ENCODE measurements at regions of chr16 and their contacts with region 1.

Region 1: DNA sequence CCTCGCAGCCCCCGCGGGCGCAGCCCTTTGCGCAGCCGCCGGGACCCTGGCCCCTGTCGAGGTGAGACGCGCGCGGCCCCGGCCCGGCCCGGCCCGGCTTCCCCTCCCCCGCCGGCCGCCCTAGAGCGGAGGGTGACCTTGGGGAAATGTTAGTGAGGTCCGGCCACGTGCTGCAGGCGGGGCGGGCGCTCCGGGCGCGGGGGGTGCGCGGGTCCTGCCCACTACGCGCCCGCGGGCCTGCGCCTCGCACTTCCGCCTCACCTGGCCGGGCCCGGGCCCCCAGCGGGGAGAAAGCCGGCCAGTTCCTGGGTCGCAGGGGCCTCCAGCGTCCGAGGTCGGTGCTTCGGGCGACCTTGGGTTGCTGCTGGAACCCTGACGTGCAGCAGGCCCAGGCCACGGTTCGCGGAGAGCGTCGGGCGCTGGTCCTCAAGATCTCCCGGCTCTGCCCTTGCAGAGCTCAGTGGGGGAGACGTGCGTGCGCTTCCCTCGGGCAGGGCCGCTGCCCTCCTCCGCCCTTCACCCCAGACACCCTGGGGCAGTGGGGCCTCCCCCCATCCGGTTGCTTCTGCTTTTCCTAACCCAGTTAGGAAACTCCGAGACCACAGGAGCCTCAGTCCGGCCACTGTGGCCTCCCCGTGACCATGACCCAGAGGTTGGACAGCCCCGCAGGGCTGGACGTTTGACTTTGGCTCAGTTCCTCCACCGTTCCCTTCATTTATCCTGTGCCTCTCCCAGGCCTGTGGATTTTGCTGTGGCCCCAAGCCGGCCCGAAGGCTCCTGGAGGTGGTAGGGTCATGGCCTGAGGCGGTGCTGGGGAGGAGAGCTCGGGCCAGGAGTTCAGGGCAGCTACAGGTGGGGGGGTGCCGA is 794 bp downstream of the MCRIP2 start:
- DNase-seq: peak in 1 of 2 experiments; percentile 73
- H3K4me3 ChIP-seq: peak overlapping the region; percentile 51 to 88 (median 61)
- H3K27ac ChIP-seq: no peak overlapping the region
- H3K4me1 ChIP-seq: peaks cover 0 to 26% (median 20%) of the 10 kb centered on the region in 4 experiments; a peak in 6 of 7 replicates
- H3K27me3 ChIP-seq: peaks cover 0 to 5% (median 1%) of the 10 kb centered on the region in 4 experiments; a peak in 2 of 7 replicates
- CTCF ChIP-seq: no peak
- EP300 ChIP-seq: no peak
- POLR2A ChIP-seq: no peak
- RAD21 ChIP-seq: no peak

Region 2: DNA sequence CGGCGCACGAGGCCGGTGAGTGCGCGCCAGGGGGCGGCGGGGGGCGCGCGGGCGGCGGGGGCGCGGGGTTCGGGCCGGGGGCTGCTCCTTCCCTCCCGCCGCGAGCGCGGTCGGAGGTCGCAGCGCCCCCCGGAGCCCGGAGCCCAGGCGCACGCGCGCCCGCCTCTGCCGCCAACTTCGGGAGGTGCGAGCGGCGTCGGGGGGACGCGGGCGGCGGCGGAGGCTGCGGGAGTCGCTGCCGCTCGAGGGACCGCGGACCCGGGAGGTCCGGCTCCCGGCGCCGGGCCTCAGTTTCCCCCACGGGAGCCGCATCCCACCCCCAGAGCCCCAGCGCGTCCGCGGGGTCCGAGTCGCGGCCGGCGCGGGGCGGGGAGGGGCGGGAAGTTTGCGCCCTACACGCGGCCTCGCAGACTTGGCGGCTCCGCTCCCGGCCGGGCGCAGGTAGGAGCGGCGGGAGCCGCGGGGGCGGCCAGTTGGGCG is 82.2 kb before region 1 on chr16 and contains the start of gene PRR35:
- CTCF ChIA-PET with region 1: no interaction called
- POLR2A ChIA-PET with region 1: no interaction called
- DNase-seq: no peak
- H3K4me3 ChIP-seq: peak within 1 kb of the TSS; percentile 8 to 55 (median 24)
- H3K27ac ChIP-seq: no peak within 1 kb of the TSS
- H3K4me1 ChIP-seq: peaks cover 0 to 11% (median 3%) of the 10 kb centered on the region in 4 experiments; a peak in 4 of 7 replicates
- H3K27me3 ChIP-seq: peaks cover 22 to 40% (median 32%) of the 10 kb centered on the region in 4 experiments; a peak in 6 of 7 replicates
- CTCF ChIP-seq: no peak
- EP300 ChIP-seq: no peak
- POLR2A ChIP-seq: no peak
- RAD21 ChIP-seq: no peak
- total RNA-seq, gene PRR35: 0.50 and 0.61 TPM in 2 replicates

Region 3: GRCh38 chr16:660459-661183 is 18.2 kb after region 1 on chr16:
- CTCF ChIA-PET with region 1: interaction called, 104 read pairs
- POLR2A ChIA-PET with region 1: interaction called, 4 read pairs
- DNase-seq: peak in 1 of 2 experiments; percentile 86
- H3K4me3 ChIP-seq: no peak overlapping the region
- H3K27ac ChIP-seq: no peak overlapping the region
- H3K4me1 ChIP-seq: peaks cover 0 to 8% (median 1%) of the 10 kb centered on the region in 4 experiments; a peak in 4 of 7 replicates
- H3K27me3 ChIP-seq: no peaks in the 10 kb centered on the region
- CTCF ChIP-seq: peak in 2 of 3 experiments; percentile 62 to 70; a peak in 3 of 4 replicates
- EP300 ChIP-seq: no peak
- POLR2A ChIP-seq: 0 out of 3 replicates have a peak, but pooled peaks of 1 of the 2 experiments have one; percentile 18
- RAD21 ChIP-seq: peak; percentile 39 to 44

Region 4: GRCh38 chr16:711548-712320 is 69.3 kb after region 1 on chr16:
- CTCF ChIA-PET with region 1: no interaction called
- POLR2A ChIA-PET with region 1: no interaction called
- DNase-seq: peak in 1 of 2 experiments; percentile 95
- H3K4me3 ChIP-seq: no peak overlapping the region
- H3K27ac ChIP-seq: no peak overlapping the region
- H3K4me1 ChIP-seq: peaks cover 0 to 17% (median 12%) of the 10 kb centered on the region in 4 experiments; a peak in 5 of 7 replicates
- H3K27me3 ChIP-seq: peaks cover 14 to 70% (median 47%) of the 10 kb centered on the region in 4 experiments
- CTCF ChIP-seq: peak; percentile 91 to 98 (median 95)
- EP300 ChIP-seq: no peak
- POLR2A ChIP-seq: no peak
- RAD21 ChIP-seq: peak; percentile 91 to 95

Region 5: GRCh38 chr16:721765-722540 is 79.5 kb after region 1 on chr16:
- CTCF ChIA-PET with region 1: no interaction called
- POLR2A ChIA-PET with region 1: no interaction called
- DNase-seq: no peak
- H3K4me3 ChIP-seq: peak overlapping the region in 1 of 4 experiments; percentile 77; a peak in 2 of 8 replicates
- H3K27ac ChIP-seq: no peak overlapping the region
- H3K4me1 ChIP-seq: peaks cover 0 to 20% (median 15%) of the 10 kb centered on the region in 4 experiments; a peak in 5 of 7 replicates
- H3K27me3 ChIP-seq: peaks cover 0 to 20% (median 4%) of the 10 kb centered on the region in 4 experiments; a peak in 4 of 7 replicates
- CTCF ChIP-seq: no peak
- EP300 ChIP-seq: no peak
- POLR2A ChIP-seq: no peak
- RAD21 ChIP-seq: no peak

Measured in H1 (cell line).